Naive thymus-derived CD4-positive, alpha-beta T cell (primary cell): ENCODE measurements at regions of chr12 and their contacts with region 1.

Region 1: GRCh38 chr12:132189378-132190011 is 45.2 kb downstream of the NOC4L start:
- DNase-seq: peak; percentile 86 to 95 (median 93)
- ATAC-seq: peak; percentile 93
- H3K4me3 ChIP-seq: peak overlapping the region; percentile 71
- H3K4me3 Mint-ChIP-seq: peak overlapping the region; percentile 80 to 99 (median 96)
- H3K27ac ChIP-seq: peak overlapping the region; percentile 82
- H3K27ac Mint-ChIP-seq: peak overlapping the region; percentile 86 to 99 (median 96)
- H3K4me1 ChIP-seq: peaks cover 20 to 39% of the 10 kb centered on the region in 2 donors
- H3K4me1 Mint-ChIP-seq: peaks cover 15 to 55% (median 40%) of the 10 kb centered on the region in 7 donors
- H3K27me3 ChIP-seq: no peaks in the 10 kb centered on the region
- H3K27me3 Mint-ChIP-seq: peaks cover 0 to 7% (median 0%) of the 10 kb centered on the region in 5 donors

Region 2: GRCh38 chr12:132083941-132084620 is 105.4 kb before region 1 on chr12:
- CTCF ChIA-PET with region 1: no interaction called
- POLR2A ChIA-PET with region 1: no interaction called
- intact Hi-C with region 1: loop called in 1 of 2 experiments (anchors 1 kb)
- DNase-seq: peak; percentile 75 to 93 (median 83)
- ATAC-seq: peak; percentile 97
- H3K4me3 ChIP-seq: peak overlapping the region; percentile 52
- H3K4me3 Mint-ChIP-seq: peak overlapping the region; percentile 85 to 98 (median 91)
- H3K27ac ChIP-seq: peak overlapping the region; percentile 89
- H3K27ac Mint-ChIP-seq: peak overlapping the region in 8 of 9 donors; percentile 74 to 93 (median 88)
- H3K4me1 ChIP-seq: peaks cover 9 to 10% of the 10 kb centered on the region in 2 donors
- H3K4me1 Mint-ChIP-seq: peaks cover 17 to 35% (median 28%) of the 10 kb centered on the region in 7 donors
- H3K27me3 ChIP-seq: no peaks in the 10 kb centered on the region
- H3K27me3 Mint-ChIP-seq: no peaks in the 10 kb centered on the region

Region 3: DNA sequence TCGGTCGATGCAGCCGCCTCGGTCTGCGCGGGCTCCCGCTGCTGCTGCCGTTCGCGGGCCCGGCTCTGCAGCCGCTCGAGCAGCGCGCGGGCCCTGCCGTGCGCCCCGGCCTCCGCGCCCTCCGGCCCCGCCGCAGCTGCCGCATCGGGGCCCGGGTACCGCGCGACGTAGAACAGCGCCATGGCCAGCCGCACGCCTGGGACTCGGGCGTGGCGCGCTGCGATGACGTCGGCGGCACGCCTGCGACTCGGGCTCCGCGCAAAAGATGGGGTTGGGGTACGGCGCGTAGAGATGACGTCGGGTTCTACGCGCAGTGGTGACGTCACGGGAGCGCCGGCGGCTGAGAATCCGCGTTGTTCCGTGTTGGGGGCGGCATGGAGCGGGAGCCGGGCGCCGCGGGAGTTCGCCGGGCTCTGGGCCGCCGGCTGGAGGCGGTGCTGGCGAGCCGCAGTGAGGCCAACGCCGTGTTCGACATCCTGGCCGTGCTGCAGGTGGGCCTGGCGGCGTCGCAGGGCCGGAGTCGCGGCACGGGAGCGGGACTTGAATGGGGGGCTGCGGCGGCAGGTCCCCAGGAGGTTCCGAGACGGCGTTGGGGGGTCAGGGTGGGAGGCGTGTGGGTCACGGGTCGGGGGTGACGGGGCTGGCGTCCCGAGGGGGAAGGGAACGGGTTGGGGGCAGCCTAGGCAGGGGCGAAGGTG is 45.2 kb before region 1 on chr12 and contains the starts of genes DDX51 and NOC4L:
- CTCF ChIA-PET with region 1: no interaction called
- POLR2A ChIA-PET with region 1: interaction called, 8 read pairs
- intact Hi-C with region 1: loop called (anchors 1 to 2 kb)
- DNase-seq: peak; percentile 93 to 99 (median 96)
- ATAC-seq: peak; percentile 98
- H3K4me3 ChIP-seq: peak within 1 kb of the TSS; percentile 80
- H3K4me3 Mint-ChIP-seq: peak within 1 kb of the TSS; percentile 85 to 97 (median 90)
- H3K27ac ChIP-seq: peak within 1 kb of the TSS; percentile 92
- H3K27ac Mint-ChIP-seq: peak within 1 kb of the TSS; percentile 83 to 99 (median 96)
- H3K4me1 ChIP-seq: peaks cover 21 to 23% of the 10 kb centered on the region in 2 donors
- H3K4me1 Mint-ChIP-seq: peaks cover 21 to 38% (median 29%) of the 10 kb centered on the region in 7 donors
- H3K27me3 ChIP-seq: no peaks in the 10 kb centered on the region
- H3K27me3 Mint-ChIP-seq: peaks cover 0 to 2% (median 0%) of the 10 kb centered on the region in 5 donors
- total RNA-seq, gene DDX51: 33.2 to 54.8 (median 50.6) TPM
- total RNA-seq, gene NOC4L: 19.3 to 27.1 (median 21.1) TPM

Region 4: DNA sequence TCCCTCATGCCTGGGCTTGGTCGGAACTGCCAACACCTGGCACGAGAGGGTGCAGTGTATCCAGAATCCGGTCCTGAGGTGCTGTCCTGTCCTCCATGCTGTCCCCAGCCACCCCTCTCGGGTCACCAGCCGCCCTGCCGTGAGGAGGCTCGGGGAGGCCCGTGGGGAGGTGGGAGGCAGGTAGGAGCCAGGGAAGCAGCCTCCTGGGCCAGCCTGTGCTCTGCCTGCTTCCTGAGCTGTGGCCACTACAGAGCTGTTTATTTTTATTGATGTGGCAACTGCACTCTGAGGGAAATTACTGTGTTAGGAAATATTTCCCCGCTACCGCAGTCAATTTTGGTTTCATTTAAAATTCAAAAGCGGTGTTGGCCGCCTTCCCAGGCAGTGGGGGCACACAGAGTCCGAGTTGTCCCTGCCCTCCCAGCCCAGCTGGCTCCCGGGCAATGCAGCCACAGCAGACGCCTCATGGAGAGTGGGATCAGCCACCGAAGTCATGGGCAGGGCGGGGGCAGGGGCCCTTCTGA is 26.9 kb before region 1 on chr12:
- CTCF ChIA-PET with region 1: interaction called, 4 read pairs
- POLR2A ChIA-PET with region 1: interaction called, 6 read pairs
- intact Hi-C with region 1: loop called in 1 of 2 experiments (anchors 1 kb)
- DNase-seq: peak in 1 of 9 donors; percentile 44
- ATAC-seq: peak; percentile 83
- H3K4me3 ChIP-seq: no peak overlapping the region
- H3K4me3 Mint-ChIP-seq: peak overlapping the region in 7 of 10 donors; percentile 17 to 69 (median 58)
- H3K27ac ChIP-seq: no peak overlapping the region
- H3K27ac Mint-ChIP-seq: no peak overlapping the region
- H3K4me1 ChIP-seq: peaks cover 0 to 24% of the 10 kb centered on the region in 2 donors
- H3K4me1 Mint-ChIP-seq: peaks cover 11 to 26% (median 16%) of the 10 kb centered on the region in 7 donors
- H3K27me3 ChIP-seq: no peaks in the 10 kb centered on the region
- H3K27me3 Mint-ChIP-seq: no peaks in the 10 kb centered on the region

Region 5: GRCh38 chr12:132178801-132179401 is 10.6 kb before region 1 on chr12:
- CTCF ChIA-PET with region 1: no interaction called
- POLR2A ChIA-PET with region 1: interaction called, 43 read pairs
- intact Hi-C with region 1: loop called in 1 of 2 experiments (anchors 1 kb)
- DNase-seq: peak in 7 of 9 donors; percentile 60 to 77 (median 70)
- ATAC-seq: peak; percentile 74
- H3K4me3 ChIP-seq: peak overlapping the region; percentile 56
- H3K4me3 Mint-ChIP-seq: peak overlapping the region; percentile 80 to 95 (median 86)
- H3K27ac ChIP-seq: peak overlapping the region; percentile 53
- H3K27ac Mint-ChIP-seq: peak overlapping the region; percentile 90 to 99 (median 94)
- H3K4me1 ChIP-seq: peaks cover 3 to 25% of the 10 kb centered on the region in 2 donors
- H3K4me1 Mint-ChIP-seq: peaks cover 21 to 61% (median 36%) of the 10 kb centered on the region in 7 donors
- H3K27me3 ChIP-seq: no peaks in the 10 kb centered on the region
- H3K27me3 Mint-ChIP-seq: peaks cover 0 to 9% (median 0%) of the 10 kb centered on the region in 5 donors

Region 6: DNA sequence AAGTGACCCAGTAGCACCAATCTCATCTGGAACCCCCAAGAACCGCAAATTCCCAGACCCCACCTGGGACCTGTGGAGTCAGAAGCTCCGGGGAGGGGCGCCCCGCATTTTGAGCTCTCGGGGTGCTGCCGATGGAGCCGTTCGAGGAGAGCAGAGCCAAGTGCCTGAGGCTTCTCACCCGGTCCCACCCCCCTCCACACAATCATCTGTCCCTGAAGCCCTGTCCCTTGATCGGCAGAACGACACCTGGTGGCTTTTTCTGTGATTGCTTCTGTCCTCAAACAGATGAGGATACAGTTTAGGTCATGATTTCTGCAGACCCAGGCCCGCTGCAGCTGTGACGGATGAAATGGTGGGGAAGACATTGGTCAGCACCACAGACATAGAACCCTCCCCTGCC is 29.4 kb after region 1 on chr12:
- CTCF ChIA-PET with region 1: interaction called, 3 read pairs
- POLR2A ChIA-PET with region 1: no interaction called
- intact Hi-C with region 1: loop called in 1 of 2 experiments (anchors 1 kb)
- DNase-seq: peak in 7 of 9 donors; percentile 40 to 67 (median 57)
- ATAC-seq: peak; percentile 66
- H3K4me3 ChIP-seq: no peak overlapping the region
- H3K4me3 Mint-ChIP-seq: no peak overlapping the region
- H3K27ac ChIP-seq: no peak overlapping the region
- H3K27ac Mint-ChIP-seq: peak overlapping the region in 3 of 9 donors; percentile 4 to 55 (median 38)
- H3K4me1 ChIP-seq: peaks cover 6 to 10% of the 10 kb centered on the region in 2 donors
- H3K4me1 Mint-ChIP-seq: peaks cover 8 to 24% (median 13%) of the 10 kb centered on the region in 7 donors
- H3K27me3 ChIP-seq: no peaks in the 10 kb centered on the region
- H3K27me3 Mint-ChIP-seq: peaks cover 0 to 12% (median 8%) of the 10 kb centered on the region in 5 donors

Region 7: DNA sequence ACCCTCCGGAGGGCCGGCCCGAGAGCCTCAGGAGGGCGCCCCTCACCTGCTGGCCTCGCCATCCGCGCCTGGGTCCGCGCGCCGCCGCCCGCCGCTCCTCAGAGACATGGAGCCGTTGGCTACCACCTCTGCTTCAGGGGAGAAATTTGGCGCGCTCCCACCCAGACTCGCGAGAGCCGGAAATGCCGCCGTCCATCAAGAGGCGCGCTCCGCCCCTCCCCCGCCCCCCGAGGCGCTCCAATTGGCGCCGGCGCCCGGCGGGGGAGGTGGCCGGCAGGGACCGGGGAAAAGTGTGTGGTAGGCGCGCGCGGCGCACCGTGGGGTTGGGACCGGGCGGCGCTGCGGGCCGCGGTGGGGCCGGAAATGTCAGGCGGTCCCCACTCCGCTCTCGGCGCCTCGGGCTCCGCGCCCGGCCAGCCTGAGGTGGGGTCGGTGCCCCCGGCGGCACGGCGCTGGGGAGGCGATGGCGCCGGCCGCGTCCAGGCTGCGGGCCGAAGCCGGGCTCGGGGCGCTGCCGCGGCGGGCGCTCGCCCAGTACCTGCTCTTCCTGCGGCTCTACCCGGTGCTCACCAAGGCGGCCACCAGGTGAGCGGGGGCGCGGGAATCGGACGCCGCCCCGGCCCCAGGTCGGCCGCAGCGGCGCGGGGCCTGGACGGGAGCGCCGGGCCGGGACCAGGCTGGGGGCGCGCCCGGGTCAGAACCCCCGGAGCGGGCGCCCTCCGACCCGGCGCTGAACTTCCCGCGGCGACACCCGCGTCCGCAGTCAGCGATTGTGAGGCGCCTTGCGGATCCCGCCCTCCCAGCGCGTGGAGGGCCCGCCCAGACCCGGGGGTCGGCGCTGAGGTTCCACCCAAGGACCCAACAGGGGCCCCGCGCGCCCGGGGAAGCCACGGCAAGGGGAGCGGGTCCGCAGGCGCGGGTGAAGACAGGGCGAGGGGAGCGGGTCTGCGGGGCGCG is 498.0 kb after region 1 on chr12 and contains the starts of genes POLE and PXMP2:
- CTCF ChIA-PET with region 1: no interaction called
- POLR2A ChIA-PET with region 1: no interaction called
- intact Hi-C with region 1: loop called in 1 of 2 experiments (anchors 5 kb)
- DNase-seq: peak; percentile 85 to 94 (median 89)
- ATAC-seq: peak; percentile 98
- H3K4me3 ChIP-seq: peak within 1 kb of the TSS; percentile 47
- H3K4me3 Mint-ChIP-seq: peak within 1 kb of the TSS; percentile 65 to 89 (median 84)
- H3K27ac ChIP-seq: peak within 1 kb of the TSS; percentile 58
- H3K27ac Mint-ChIP-seq: peak within 1 kb of the TSS in 3 of 9 donors; percentile 45 to 92 (median 87)
- H3K4me1 ChIP-seq: peaks cover 4 to 14% of the 10 kb centered on the region in 2 donors
- H3K4me1 Mint-ChIP-seq: peaks cover 0 to 31% (median 22%) of the 10 kb centered on the region in 7 donors
- H3K27me3 ChIP-seq: no peaks in the 10 kb centered on the region
- H3K27me3 Mint-ChIP-seq: no peaks in the 10 kb centered on the region
- total RNA-seq, gene POLE: 54.5 to 138 (median 62.1) TPM
- total RNA-seq, gene PXMP2: 2.6 to 26.8 (median 5.4) TPM